ENCODE measurements at regions of chr3 and their contacts with region 1.

Region 1: DNA sequence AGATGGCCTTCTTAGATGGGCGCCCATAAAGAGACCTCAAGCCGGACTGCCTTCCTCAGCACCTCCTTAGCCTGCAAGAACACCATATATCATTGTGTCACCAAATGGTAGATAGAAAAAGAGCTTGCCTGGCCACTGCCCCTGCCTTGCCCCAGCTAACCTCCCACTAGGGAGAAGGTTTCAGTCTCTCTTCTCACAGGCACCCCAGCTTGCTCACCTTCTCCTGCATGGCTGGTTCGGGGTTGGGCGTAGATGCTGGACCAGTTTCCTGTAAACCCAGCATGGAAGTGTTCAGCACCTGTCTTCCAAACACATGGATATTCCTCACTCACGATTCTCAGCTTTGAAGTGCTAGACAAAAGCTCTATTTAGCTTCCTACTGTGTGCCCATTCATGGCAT is 3.3 kb upstream of the SLC22A14 start:
- DNase-seq: no peak
- H3K4me3 ChIP-seq: no peak overlapping the region
- H3K27ac ChIP-seq: no peak overlapping the region
- H3K4me1 ChIP-seq: no peaks in the 10 kb centered on the region
- H3K27me3 ChIP-seq: no peaks in the 10 kb centered on the region
- CTCF ChIP-seq: no peak

Region 2: DNA sequence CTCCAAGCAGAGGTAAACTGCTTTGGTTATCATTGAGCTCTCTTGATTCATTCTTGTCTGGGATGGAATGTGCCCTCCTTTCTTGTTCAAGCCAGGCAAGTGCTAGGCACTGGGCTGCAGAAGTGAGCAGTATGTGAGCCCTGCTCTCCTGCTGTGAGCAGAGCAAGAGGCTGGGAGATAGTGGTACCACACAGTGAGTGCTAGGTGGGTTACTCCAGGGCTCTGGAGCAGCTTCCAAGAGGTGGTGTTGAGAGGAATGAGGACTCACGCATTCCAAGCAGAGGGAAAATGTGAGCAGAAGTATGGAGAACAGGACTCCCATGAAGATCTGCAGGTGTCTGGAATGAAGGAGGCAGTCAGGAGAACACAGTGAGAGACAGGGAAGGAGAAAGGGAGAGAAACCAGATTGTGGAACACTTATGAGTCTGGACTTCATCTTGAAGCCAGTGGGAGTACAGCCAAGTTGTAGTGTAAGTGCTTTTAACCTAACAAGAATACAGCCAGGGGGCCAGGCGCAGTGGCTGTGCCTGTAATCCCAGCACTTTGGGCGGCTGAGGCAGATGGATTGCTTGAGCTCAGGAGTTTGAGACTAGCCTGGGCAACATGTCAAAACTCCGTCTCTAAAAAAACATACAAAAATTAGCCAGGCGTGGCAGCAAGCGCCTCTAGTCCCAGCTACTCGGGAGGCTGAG is 617.1 kb before region 1 on chr3:
- CTCF ChIA-PET with region 1: no interaction called
- POLR2A ChIA-PET with region 1: no interaction called
- intact Hi-C with region 1: no loop called
- DNase-seq: no peak
- H3K4me3 ChIP-seq: no peak overlapping the region
- H3K27ac ChIP-seq: no peak overlapping the region
- H3K4me1 ChIP-seq: no peaks in the 10 kb centered on the region
- H3K27me3 ChIP-seq: peaks cover 8% of the 10 kb centered on the region; the same call in 1 of the 2 replicates
- CTCF ChIP-seq: no peak

Region 3: DNA sequence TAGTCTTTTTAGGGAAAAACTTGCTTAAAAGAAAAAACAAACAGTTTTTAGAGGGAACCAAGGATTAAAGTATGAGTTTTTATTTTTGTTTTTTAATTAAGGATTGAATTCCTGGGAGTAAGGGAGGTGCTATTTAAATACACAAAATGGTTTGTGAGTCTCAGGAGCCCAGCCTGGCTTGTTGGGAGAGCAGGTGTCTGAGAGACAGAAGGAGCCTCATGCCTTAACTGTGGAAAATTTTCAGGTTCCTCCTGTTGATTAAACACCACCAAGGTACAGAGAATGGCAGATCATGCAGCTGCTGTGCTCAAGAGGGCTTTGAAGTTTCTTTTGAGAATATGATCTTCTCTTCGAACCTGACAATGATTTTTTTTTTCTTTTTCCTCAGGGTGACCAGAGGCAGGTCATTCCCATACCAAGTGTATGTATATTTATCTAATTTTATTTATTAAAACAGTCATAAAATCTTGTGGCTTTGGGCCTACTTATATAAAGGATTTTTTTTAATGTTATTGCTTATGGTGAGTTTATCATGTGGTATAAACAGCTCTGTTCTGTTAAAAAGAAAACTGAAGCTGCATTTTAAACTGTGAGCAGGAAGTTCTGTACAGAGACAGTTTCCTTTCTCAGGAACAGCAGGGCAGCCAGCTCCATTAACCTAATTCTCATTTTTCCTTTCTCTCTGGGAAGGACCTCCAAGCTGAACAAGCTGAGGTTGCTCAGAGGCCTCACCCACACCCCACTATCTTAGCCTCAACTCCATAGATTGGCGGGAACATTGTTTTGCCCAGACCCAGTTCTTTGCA is 321.9 kb before region 1 on chr3:
- CTCF ChIA-PET with region 1: interaction called, 12 read pairs
- POLR2A ChIA-PET with region 1: no interaction called
- intact Hi-C with region 1: no loop called
- DNase-seq: no peak
- H3K4me3 ChIP-seq: no peak overlapping the region
- H3K27ac ChIP-seq: no peak overlapping the region
- H3K4me1 ChIP-seq: no peaks in the 10 kb centered on the region
- H3K27me3 ChIP-seq: no peaks in the 10 kb centered on the region
- CTCF ChIP-seq: no peak

Region 4: GRCh38 chr3:38029400-38030125 is 249.3 kb before region 1 on chr3 and contains the start of gene PLCD1:
- CTCF ChIA-PET with region 1: no interaction called
- POLR2A ChIA-PET with region 1: no interaction called
- intact Hi-C with region 1: no loop called
- DNase-seq: peak in 1 of 2 experiments; percentile 64
- H3K4me3 ChIP-seq: no peak within 1 kb of the TSS
- H3K27ac ChIP-seq: peak within 1 kb of the TSS; percentile 87
- H3K4me1 ChIP-seq: peaks cover 47% of the 10 kb centered on the region
- H3K27me3 ChIP-seq: no peaks in the 10 kb centered on the region
- CTCF ChIP-seq: no peak
- total RNA-seq, gene PLCD1: 13.5 and 19.4 TPM in 2 replicates